Right cardiac atrium (tissue), 5 donors: ENCODE measurements at regions of chr1 and their contacts with region 1.

Region 1: GRCh38 chr1:19643602-19644394 is at the start of gene NBL1:
- DNase-seq: peak; percentile 80 to 93 (median 92)
- ATAC-seq: peak; percentile 76 to 86
- H3K4me3 ChIP-seq: peak within 1 kb of the TSS; percentile 87
- H3K27ac ChIP-seq: peak within 1 kb of the TSS; percentile 71
- H3K4me1 ChIP-seq: peaks cover 2% of the 10 kb centered on the region
- H3K27me3 ChIP-seq: no peaks in the 10 kb centered on the region
- total RNA-seq, gene NBL1: 40.7 to 64.8 (median 46.1) TPM

Region 2: GRCh38 chr1:19514391-19514831 is 129.4 kb before region 1 on chr1:
- intact Hi-C with region 1: no loop called
- DNase-seq: peak; percentile 30 to 72 (median 70)
- ATAC-seq: peak; percentile 74 to 90
- H3K4me3 ChIP-seq: no peak overlapping the region
- H3K27ac ChIP-seq: peak overlapping the region; percentile 71
- H3K4me1 ChIP-seq: no peaks in the 10 kb centered on the region
- H3K27me3 ChIP-seq: no peaks in the 10 kb centered on the region

Region 3: DNA sequence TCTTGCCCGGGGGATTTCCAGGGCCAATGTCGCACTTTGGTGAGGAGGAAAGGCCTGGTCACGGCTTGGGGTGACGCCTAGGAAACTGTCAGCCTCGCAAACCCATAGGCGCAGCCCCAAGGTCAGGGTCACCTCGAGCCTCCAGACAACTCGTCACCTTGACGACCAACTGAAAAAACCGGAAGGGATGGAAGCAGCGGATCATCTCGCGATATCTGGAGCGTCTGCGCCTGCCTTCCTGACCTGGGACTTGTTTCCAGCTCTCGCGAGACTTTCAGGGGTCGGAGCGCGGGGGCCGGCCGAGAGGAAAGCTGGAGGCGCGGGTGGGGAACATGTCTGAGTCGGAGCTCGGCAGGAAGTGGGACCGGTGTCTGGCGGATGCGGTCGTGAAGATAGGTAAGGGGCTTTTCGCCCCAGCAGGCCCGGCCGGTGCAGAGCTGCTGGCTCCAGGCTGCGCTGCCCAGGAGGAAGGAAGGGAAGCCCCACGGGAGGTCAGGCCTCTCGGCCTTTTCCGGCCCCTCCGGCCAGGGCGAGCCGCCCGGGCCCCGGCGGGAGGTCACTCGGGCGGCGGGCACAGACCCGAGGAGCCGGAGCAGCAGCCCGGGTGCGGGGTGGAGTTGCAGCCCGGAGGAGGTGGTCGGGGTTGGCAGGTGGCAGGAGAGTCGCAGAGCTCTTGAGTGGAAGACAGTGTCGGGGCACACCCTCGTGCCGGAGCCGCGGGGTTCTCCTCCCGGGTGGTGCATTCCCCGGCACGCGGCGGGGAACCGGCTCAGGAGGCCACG is 46.9 kb before region 1 on chr1:
- intact Hi-C with region 1: loop called in 2 of 4 experiments (anchors 5 to 10 kb)
- DNase-seq: peak; percentile 98
- ATAC-seq: peak; percentile 92 to 96
- H3K4me3 ChIP-seq: peak overlapping the region; percentile 98
- H3K27ac ChIP-seq: peak overlapping the region; percentile 99
- H3K4me1 ChIP-seq: no peaks in the 10 kb centered on the region
- H3K27me3 ChIP-seq: no peaks in the 10 kb centered on the region